Astrocyte of the spinal cord (primary cell): ENCODE measurements at regions of chr1 and their contacts with region 1.

Region 1: GRCh38 chr1:174743654-174744561 is 255.8 kb upstream of the CACYBP start:
- DNase-seq: peak; percentile 56
- H3K4me3 ChIP-seq: no peak overlapping the region
- CTCF ChIP-seq: peak; percentile 54

Region 2: GRCh38 chr1:174262349-174263241 is 481.3 kb before region 1 on chr1:
- in situ Hi-C with region 1: loop called (anchors 25 kb)
- DNase-seq: peak; percentile 76
- H3K4me3 ChIP-seq: no peak overlapping the region
- CTCF ChIP-seq: peak; percentile 71